PC-3 (cell line): ENCODE measurements at regions of chr21 and their contacts with region 1.

Region 1: DNA sequence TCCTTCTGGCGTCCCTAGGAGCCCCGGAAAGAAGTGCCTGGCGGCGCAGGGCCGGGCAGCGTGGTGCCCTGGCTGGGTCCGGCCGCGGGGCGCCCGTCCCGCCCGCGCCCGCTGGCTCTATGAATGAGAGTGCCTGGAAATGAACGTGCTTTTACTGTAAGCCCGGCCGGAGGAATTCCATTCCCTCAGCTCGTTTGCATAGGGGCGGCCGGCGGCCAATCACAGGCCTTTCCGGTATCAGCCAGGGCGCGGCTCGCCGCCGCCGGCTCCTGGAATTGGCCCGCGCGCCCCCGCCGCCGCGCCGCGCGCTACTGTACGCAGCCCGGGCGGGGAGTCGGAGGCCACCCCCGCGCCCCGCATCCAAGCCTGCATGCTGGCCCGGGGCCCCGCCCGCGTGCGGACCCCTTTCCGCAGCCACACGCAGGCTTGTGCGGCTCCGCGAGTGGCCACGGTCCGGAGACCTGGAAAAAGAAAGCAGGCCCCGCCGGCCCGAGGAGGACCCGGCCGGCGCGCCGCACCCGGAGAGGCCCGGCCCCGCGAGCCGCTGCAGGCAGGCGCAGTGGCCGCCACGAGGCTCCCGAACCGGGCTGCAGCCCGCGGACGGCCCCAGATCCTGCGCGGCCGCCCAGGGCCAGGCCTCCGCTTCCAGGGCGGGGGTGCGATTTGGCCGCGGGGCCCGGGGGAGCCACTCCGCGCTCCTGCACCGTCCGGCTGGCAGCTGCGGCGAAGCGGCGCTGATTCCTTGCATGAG is 160.4 kb downstream of the RUNX1 start:
- DNase-seq: peak; percentile 97
- ATAC-seq: peak; percentile 52
- H3K4me3 ChIP-seq: peak overlapping the region; percentile 95
- H3K27ac ChIP-seq: peak overlapping the region; percentile 90
- H3K4me1 ChIP-seq: peaks cover 16% of the 10 kb centered on the region; the same call in 1 of the 2 replicates
- H3K27me3 ChIP-seq: no peaks in the 10 kb centered on the region
- CTCF ChIP-seq: no peak

Region 2: DNA sequence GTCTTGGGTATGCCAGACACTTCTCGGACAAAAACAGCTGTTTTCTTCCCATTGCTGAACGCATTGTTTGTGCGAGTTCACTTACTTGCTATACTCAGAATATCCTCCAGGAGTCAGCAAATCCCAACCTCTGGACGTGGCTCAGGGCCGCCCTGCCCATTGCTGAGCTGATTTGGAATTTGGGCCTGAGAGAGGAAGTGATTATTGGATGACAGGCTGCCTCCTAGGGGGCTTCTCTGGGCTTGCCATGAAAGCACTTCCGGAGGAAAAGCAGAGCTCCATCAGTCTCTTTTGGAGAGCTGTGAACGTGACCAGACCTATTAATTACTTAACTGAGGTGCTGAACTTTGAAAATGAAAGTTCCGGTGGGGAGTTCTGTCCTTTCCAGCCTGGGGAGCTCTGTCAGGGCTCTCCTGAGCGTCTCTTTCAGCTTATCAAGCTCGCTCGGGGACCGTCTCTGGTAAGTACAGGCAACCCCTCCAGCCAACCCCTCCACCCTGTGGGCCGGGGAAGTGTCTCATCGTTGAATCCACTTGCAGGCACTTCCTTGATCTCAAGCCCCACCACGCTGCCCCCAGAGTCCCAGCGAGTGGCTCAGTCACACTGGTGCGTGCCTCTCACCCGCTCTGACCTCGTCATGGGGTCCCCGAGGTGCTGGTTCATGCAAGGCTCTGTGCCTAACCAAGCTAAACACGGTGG is 143.0 kb before region 1 on chr21:
- CTCF ChIA-PET with region 1: interaction called, 17 read pairs
- POLR2A ChIA-PET with region 1: interaction called, 8 read pairs
- intact Hi-C with region 1: loop called (anchors 1 kb)
- DNase-seq: peak; percentile 93
- ATAC-seq: peak; percentile 68
- H3K4me3 ChIP-seq: no peak overlapping the region
- H3K27ac ChIP-seq: no peak overlapping the region
- H3K4me1 ChIP-seq: peaks cover 31% of the 10 kb centered on the region
- H3K27me3 ChIP-seq: no peaks in the 10 kb centered on the region
- CTCF ChIP-seq: peak; percentile 97

Region 3: DNA sequence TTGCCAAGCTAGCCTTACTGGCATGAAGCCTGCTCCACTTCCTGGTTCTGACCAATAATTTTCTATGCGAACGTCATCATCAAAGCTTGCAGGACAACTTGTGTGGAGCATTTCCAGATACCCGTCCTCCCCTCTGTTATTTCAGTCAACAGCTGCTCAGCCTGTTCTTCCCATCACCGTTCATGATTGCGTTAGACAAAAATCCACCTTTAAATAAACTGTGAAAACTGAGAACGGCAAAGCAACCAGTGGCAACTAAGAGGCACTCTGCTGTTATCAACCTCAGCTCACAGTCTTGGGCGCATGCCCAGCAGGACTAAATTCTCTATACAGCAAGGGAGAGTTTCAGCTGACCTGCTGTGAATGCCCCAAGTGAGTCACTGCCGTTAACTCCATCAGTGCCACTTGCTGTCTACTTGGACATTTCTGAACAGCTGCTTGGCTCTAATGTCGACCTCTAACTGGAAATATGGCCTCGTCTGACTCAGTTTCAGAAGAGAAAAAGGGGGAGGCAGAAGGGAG is 367.8 kb after region 1 on chr21:
- CTCF ChIA-PET with region 1: no interaction called
- POLR2A ChIA-PET with region 1: no interaction called
- intact Hi-C with region 1: loop called (anchors 5 kb)
- DNase-seq: peak; percentile 98
- ATAC-seq: peak; percentile 87
- H3K4me3 ChIP-seq: peak overlapping the region; percentile 58
- H3K27ac ChIP-seq: peak overlapping the region; percentile 92
- H3K4me1 ChIP-seq: peaks cover 58% of the 10 kb centered on the region
- H3K27me3 ChIP-seq: no peaks in the 10 kb centered on the region
- CTCF ChIP-seq: no peak

Region 4: GRCh38 chr21:35616090-35616489 is 727.3 kb after region 1 on chr21:
- CTCF ChIA-PET with region 1: no interaction called
- POLR2A ChIA-PET with region 1: no interaction called
- intact Hi-C with region 1: loop called (anchors 2 kb)
- DNase-seq: peak; percentile 49
- ATAC-seq: no peak; the same call in 1 of the 2 replicates
- H3K4me3 ChIP-seq: no peak overlapping the region
- H3K27ac ChIP-seq: no peak overlapping the region
- H3K4me1 ChIP-seq: peaks cover 22% of the 10 kb centered on the region
- H3K27me3 ChIP-seq: no peaks in the 10 kb centered on the region
- CTCF ChIP-seq: peak; percentile 72

Region 5: GRCh38 chr21:35932232-35932911 is 1043.6 kb after region 1 on chr21:
- CTCF ChIA-PET with region 1: no interaction called
- POLR2A ChIA-PET with region 1: no interaction called
- intact Hi-C with region 1: loop called (anchors 10 kb)
- DNase-seq: peak; percentile 90
- ATAC-seq: peak; percentile 85
- H3K4me3 ChIP-seq: peak overlapping the region; percentile 29; the same call in 1 of the 2 replicates
- H3K27ac ChIP-seq: peak overlapping the region; percentile 64
- H3K4me1 ChIP-seq: peaks cover 25% of the 10 kb centered on the region
- H3K27me3 ChIP-seq: no peaks in the 10 kb centered on the region
- CTCF ChIP-seq: no peak